H1 (cell line): ENCODE measurements at regions of chr22 and their contacts with region 1.

Region 1: DNA sequence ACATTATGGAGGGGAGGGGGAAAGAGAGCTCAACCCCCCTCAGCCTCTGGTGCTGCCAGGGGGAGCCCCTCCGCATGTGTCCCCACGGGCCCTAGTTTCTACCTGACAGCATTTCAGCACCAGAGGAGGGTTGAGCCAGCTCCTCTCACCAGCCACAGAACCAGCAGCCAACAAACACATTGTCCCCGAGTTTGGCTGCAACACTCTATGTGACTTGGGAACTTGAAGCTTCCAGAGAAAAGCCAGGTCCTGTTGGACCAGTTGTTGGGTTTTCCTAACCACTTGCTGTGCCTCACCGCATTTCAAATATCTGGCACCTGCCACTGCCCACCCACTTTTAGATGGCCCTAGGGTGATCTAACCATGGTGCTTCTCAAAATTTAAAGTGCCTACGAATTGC is 13.5 kb downstream of the TMA7B start:
- DNase-seq: no peak
- H3K4me3 ChIP-seq: no peak overlapping the region
- H3K27ac ChIP-seq: no peak overlapping the region
- H3K4me1 ChIP-seq: peaks cover 0 to 7% (median 0%) of the 10 kb centered on the region in 4 experiments; a peak in 4 of 7 replicates
- H3K27me3 ChIP-seq: peaks cover 0 to 2% (median under 1%) of the 10 kb centered on the region in 4 experiments; a peak in 3 of 7 replicates
- CTCF ChIP-seq: no peak
- EP300 ChIP-seq: no peak
- POLR2A ChIP-seq: no peak
- RAD21 ChIP-seq: no peak

Region 2: DNA sequence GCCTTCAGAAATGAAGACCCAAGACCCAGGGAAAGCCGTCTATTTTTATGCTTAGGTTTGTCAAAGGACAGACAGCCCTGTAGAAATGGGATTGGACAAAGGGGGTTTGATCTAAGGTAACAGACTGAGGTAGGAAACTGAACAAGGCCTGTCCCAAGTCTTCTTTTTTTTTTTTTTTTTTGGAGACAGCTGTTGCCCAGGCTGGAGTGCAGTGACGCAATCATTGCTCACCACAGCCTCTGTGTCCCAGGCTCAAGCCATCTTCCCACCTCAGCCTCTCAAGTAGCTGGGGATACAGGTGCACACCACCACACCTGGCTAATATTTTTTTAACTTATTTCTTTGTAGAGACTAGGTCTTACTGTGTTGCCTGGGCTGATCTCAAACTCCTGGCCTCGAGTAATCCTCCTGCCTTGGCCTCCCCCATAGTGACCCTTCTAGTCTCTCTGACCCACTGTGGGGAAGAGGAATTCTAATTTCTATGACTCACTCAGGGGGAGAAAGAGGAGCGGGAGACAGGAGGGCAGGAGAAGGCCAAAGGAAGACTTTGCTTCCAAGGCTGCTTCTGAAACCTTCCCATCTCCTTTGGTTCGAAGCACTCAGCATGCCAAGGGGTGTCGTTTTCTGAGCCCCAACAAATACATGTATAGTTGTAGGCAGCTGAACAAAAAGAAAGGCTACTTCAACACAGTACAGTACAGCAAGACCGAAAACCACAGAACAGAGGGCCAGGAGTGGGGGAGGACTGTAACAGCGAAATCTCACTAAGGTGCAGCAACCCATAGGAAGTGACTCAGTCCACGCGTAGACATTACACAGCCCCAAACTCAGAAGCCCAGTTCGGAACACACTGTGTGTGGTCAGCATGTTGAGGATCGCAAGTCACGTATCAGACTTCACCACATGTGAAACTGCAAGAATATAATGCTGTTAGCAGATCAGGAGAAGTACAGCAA is 12.6 kb before region 1 on chr22:
- CTCF ChIA-PET with region 1: interaction called, 14 read pairs
- POLR2A ChIA-PET with region 1: interaction called, 5 read pairs
- DNase-seq: no peak
- H3K4me3 ChIP-seq: no peak overlapping the region
- H3K27ac ChIP-seq: no peak overlapping the region
- H3K4me1 ChIP-seq: peaks cover 0 to 6% (median 3%) of the 10 kb centered on the region in 4 experiments; a peak in 4 of 7 replicates
- H3K27me3 ChIP-seq: peaks cover 0 to 7% (median 0%) of the 10 kb centered on the region in 4 experiments; a peak in 3 of 7 replicates
- CTCF ChIP-seq: no peak
- EP300 ChIP-seq: no peak
- POLR2A ChIP-seq: no peak
- RAD21 ChIP-seq: no peak

Region 3: GRCh38 chr22:39985383-39986035 is 11.9 kb after region 1 on chr22:
- CTCF ChIA-PET with region 1: interaction called, 13 read pairs
- POLR2A ChIA-PET with region 1: interaction called, 3 read pairs
- DNase-seq: no peak
- H3K4me3 ChIP-seq: no peak overlapping the region
- H3K27ac ChIP-seq: no peak overlapping the region
- H3K4me1 ChIP-seq: peaks cover 0 to 4% (median 2%) of the 10 kb centered on the region in 4 experiments; a peak in 3 of 7 replicates
- H3K27me3 ChIP-seq: peaks cover 0 to 3% (median 0%) of the 10 kb centered on the region in 4 experiments; a peak in 4 of 7 replicates
- CTCF ChIP-seq: no peak
- EP300 ChIP-seq: no peak
- POLR2A ChIP-seq: no peak
- RAD21 ChIP-seq: no peak